Caco-2 (cell line): ENCODE measurements at regions of chr1 and their contacts with region 1.

Region 1: DNA sequence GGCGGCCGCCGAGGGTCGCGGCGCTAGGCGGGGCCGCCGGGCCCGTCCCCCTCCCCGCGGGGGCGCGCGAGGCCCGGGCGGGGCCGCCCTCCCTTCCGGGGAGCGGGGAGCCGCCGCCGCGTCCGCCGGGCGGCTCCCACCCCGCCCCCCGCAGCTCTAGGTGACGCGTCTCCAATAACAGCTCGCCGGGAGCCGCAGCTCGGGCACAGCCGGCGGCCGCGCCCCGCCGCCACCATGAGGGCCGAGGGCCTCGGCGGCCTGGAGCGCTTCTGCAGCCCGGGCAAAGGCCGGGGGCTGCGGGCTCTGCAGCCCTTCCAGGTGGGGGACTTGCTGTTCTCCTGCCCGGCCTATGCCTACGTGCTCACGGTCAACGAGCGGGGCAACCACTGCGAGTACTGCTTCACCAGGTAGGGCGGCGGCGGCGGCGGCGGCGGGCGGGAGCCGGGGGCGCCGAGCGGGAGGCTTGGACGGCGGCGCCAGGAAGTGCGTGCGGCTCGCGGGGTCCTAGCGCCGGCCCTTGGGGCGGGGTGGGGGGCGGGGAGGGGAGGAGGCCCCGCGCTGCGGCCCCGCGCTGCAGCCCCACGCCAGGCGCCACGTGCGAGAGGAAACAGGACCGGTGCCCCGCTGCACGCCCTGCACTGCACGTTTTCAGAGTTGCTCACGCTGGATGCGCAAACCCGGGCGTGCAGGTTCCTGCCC is at the start of gene SMYD2:
- DNase-seq: peak; percentile 82 to 87
- H3K4me3 ChIP-seq: peak within 1 kb of the TSS; percentile 89
- H3K4me3 Mint-ChIP-seq: peak within 1 kb of the TSS; percentile 94
- H3K27ac Mint-ChIP-seq: peak within 1 kb of the TSS; percentile 94
- H3K4me1 ChIP-seq: peaks cover 69% of the 10 kb centered on the region
- H3K4me1 Mint-ChIP-seq: peaks cover 53% of the 10 kb centered on the region
- H3K27me3 ChIP-seq: no peaks in the 10 kb centered on the region
- H3K27me3 Mint-ChIP-seq: no peaks in the 10 kb centered on the region
- CTCF ChIP-seq: no peak
- total RNA-seq, gene SMYD2: 161 and 182 TPM in 2 replicates

Region 2: DNA sequence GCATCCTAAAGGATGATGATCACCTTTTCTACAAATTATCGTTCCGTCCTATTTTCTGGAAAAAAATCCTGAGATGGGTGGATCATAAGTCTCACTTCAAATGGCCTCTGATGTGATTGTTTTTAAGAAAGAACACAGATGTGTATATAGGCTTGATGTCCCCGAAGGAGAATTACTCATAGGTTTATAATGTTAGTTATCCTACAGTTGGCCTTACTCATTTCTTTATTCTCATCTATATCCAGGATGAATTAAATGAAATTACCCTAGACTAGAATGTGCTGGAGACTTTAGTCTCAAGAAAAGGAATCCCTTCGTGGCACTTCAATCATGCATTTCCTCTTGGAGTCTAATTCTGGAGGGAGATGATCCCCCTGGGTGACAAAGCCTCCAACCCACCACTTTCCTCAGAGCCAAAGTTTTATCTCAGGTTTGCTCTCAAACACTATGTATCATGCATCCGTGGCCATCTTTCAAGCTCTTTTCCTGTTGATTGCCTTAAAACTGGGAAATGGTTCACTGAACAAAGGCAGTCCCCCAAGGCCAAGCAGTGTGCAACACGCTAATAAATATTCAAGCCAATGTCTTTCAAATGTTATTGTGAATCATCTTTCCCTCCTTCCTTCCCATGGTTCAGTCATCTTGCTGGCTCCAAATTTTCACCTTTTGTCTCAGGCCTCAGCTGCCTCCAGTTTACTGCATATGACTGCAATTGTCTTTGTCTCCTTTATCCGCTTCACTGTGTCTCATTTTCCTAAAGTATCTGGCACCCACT is 32.7 kb before region 1 on chr1:
- CTCF ChIA-PET with region 1: no interaction called
- POLR2A ChIA-PET with region 1: no interaction called
- intact Hi-C with region 1: no loop called
- DNase-seq: no peak
- H3K4me3 ChIP-seq: no peak overlapping the region
- H3K4me3 Mint-ChIP-seq: no peak overlapping the region
- H3K27ac Mint-ChIP-seq: no peak overlapping the region
- H3K4me1 ChIP-seq: peaks cover 22% of the 10 kb centered on the region
- H3K4me1 Mint-ChIP-seq: peaks cover 33% of the 10 kb centered on the region
- H3K27me3 ChIP-seq: no peaks in the 10 kb centered on the region
- H3K27me3 Mint-ChIP-seq: no peaks in the 10 kb centered on the region
- CTCF ChIP-seq: no peak

Region 3: GRCh38 chr1:214261206-214262123 is 19.7 kb before region 1 on chr1:
- CTCF ChIA-PET with region 1: interaction called, 3 read pairs
- POLR2A ChIA-PET with region 1: no interaction called
- intact Hi-C with region 1: loop called (anchors 1 kb)
- DNase-seq: peak; percentile 87 to 94
- H3K4me3 ChIP-seq: no peak overlapping the region
- H3K4me3 Mint-ChIP-seq: no peak overlapping the region
- H3K27ac Mint-ChIP-seq: no peak overlapping the region
- H3K4me1 ChIP-seq: peaks cover 15% of the 10 kb centered on the region; the same call in 1 of the 2 replicates
- H3K4me1 Mint-ChIP-seq: peaks cover 35% of the 10 kb centered on the region
- H3K27me3 ChIP-seq: no peaks in the 10 kb centered on the region
- H3K27me3 Mint-ChIP-seq: no peaks in the 10 kb centered on the region
- CTCF ChIP-seq: peak; percentile 90 to 99

Region 4: GRCh38 chr1:214296860-214297745 is 15.9 kb after region 1 on chr1:
- CTCF ChIA-PET with region 1: no interaction called
- POLR2A ChIA-PET with region 1: no interaction called
- intact Hi-C with region 1: loop called (anchors 1 kb)
- DNase-seq: no peak
- H3K4me3 ChIP-seq: no peak overlapping the region
- H3K4me3 Mint-ChIP-seq: no peak overlapping the region
- H3K27ac Mint-ChIP-seq: peak overlapping the region; percentile 7
- H3K4me1 ChIP-seq: peaks cover 20% of the 10 kb centered on the region
- H3K4me1 Mint-ChIP-seq: peaks cover 17% of the 10 kb centered on the region
- H3K27me3 ChIP-seq: no peaks in the 10 kb centered on the region
- H3K27me3 Mint-ChIP-seq: no peaks in the 10 kb centered on the region
- CTCF ChIP-seq: no peak

Region 5: GRCh38 chr1:214515544-214516429 is 234.6 kb after region 1 on chr1:
- CTCF ChIA-PET with region 1: no interaction called
- POLR2A ChIA-PET with region 1: no interaction called
- intact Hi-C with region 1: loop called (anchors 1 kb)
- DNase-seq: no peak
- H3K4me3 ChIP-seq: 0 out of 2 replicates have a peak overlapping the region, but pooled peaks have one; percentile 1
- H3K4me3 Mint-ChIP-seq: peak overlapping the region; percentile 75
- H3K27ac Mint-ChIP-seq: peak overlapping the region; percentile 91
- H3K4me1 ChIP-seq: peaks cover 65% of the 10 kb centered on the region
- H3K4me1 Mint-ChIP-seq: peaks cover 55% of the 10 kb centered on the region
- H3K27me3 ChIP-seq: no peaks in the 10 kb centered on the region
- H3K27me3 Mint-ChIP-seq: no peaks in the 10 kb centered on the region
- CTCF ChIP-seq: no peak